MCF 10A (cell line): ENCODE measurements at regions of chr6 and their contacts with region 1.

Region 1: GRCh38 chr6:73675466-73676098 is 20.4 kb upstream of the CD109 start:
- DNase-seq: peak; percentile 90
- H3K4me3 Mint-ChIP-seq: no peak overlapping the region
- H3K27ac Mint-ChIP-seq: no peak overlapping the region
- H3K4me1 Mint-ChIP-seq: peaks cover 18% of the 10 kb centered on the region
- H3K27me3 Mint-ChIP-seq: no peaks in the 10 kb centered on the region
- CTCF ChIP-seq: peak; percentile 85

Region 2: DNA sequence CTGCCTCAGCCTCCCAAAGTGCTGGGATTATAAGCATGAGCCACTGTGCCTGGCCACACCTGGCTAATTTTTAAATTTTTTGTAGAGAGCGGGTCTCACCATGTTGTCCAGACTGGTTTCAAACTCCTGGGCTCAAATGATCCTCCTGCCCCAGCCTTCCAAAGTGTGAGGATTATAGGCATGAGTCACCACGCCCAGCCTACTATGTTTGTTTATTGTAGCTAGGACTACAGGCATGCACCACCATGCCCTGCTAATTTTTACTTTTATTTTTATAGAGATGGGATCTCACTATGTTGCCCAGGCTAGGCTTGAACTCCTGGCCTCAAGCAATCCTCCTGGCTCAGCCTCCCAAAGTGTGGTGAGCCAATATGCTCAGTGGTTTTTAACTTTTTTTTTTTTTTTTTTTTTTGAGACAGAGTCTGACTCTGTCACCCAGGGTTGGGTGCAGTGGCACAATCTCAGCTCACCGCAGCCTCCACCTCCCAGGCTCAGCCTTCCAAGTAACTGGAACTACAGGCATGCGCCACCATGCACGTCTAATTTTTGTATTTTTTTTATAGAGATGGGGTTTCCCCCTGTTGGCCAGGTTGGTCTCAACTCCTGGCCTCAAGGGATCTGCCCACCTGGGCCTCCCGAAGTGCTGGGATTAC is 293.0 kb before region 1 on chr6:
- CTCF ChIA-PET with region 1: no interaction called
- POLR2A ChIA-PET with region 1: no interaction called
- intact Hi-C with region 1: no loop called
- DNase-seq: peak; percentile 54
- H3K4me3 Mint-ChIP-seq: no peak overlapping the region
- H3K27ac Mint-ChIP-seq: no peak overlapping the region
- H3K4me1 Mint-ChIP-seq: no peaks in the 10 kb centered on the region
- H3K27me3 Mint-ChIP-seq: no peaks in the 10 kb centered on the region
- CTCF ChIP-seq: no peak

Region 3: GRCh38 chr6:73688351-73688750 is 12.8 kb after region 1 on chr6:
- CTCF ChIA-PET with region 1: interaction called, 13 read pairs
- POLR2A ChIA-PET with region 1: interaction called, 15 read pairs
- intact Hi-C with region 1: no loop called
- DNase-seq: no peak
- H3K4me3 Mint-ChIP-seq: no peak overlapping the region
- H3K27ac Mint-ChIP-seq: no peak overlapping the region
- H3K4me1 Mint-ChIP-seq: peaks cover 12% of the 10 kb centered on the region
- H3K27me3 Mint-ChIP-seq: no peaks in the 10 kb centered on the region
- CTCF ChIP-seq: no peak

Region 4: GRCh38 chr6:73695619-73696421 is 20.2 kb after region 1 on chr6 and contains the start of gene CD109:
- CTCF ChIA-PET with region 1: interaction called, 9 read pairs
- POLR2A ChIA-PET with region 1: interaction called, 15 read pairs
- intact Hi-C with region 1: loop called (anchors 1 kb)
- DNase-seq: peak; percentile 85
- H3K4me3 Mint-ChIP-seq: peak within 1 kb of the TSS; percentile 93
- H3K27ac Mint-ChIP-seq: peak within 1 kb of the TSS; percentile 93
- H3K4me1 Mint-ChIP-seq: peaks cover 55% of the 10 kb centered on the region
- H3K27me3 Mint-ChIP-seq: no peaks in the 10 kb centered on the region
- CTCF ChIP-seq: no peak
- total RNA-seq, gene CD109: 91.0 and 94.5 TPM in 2 replicates

Region 5: DNA sequence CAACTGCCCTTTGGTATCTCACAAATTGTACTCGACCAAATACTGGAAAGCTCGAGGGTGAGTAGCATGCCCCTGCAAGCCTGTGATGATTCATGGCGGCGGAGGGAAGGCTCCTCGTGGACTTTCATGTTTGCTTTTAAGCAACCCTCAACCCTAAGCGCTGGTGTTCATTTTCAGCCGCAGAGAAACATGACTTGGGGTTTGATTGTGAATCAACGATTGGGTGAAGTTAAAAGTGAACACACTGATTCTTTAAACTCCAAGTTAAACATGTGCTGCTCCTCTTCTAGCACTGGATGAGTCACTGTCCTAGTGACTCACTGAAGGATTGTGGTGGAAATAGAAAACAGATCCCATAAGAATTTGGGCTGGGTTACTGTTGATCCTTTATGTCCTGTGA is 28.7 kb after region 1 on chr6:
- CTCF ChIA-PET with region 1: interaction called, 10 read pairs
- POLR2A ChIA-PET with region 1: interaction called, 8 read pairs
- intact Hi-C with region 1: no loop called
- DNase-seq: peak; percentile 99
- H3K4me3 Mint-ChIP-seq: no peak overlapping the region
- H3K27ac Mint-ChIP-seq: no peak overlapping the region
- H3K4me1 Mint-ChIP-seq: peaks cover 30% of the 10 kb centered on the region
- H3K27me3 Mint-ChIP-seq: no peaks in the 10 kb centered on the region
- CTCF ChIP-seq: no peak

Region 6: DNA sequence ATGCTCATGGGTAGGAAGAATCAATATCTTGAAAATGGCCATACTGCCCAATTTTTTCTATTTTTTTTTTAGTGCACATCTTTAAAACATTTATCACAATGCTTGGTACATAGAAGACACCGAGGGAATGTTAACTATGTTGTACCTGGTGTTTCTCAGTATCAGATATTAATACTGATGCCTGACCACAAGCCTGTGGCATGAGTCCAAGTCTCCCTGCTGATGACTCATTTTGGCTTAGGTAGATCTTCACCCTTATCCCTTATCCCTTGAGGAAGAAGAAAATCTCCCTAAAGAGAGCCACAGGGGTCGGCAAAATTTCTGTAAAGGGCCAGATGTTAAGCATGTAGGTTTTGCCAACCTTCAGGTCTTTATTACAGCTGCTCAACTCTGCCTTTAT is 34.9 kb after region 1 on chr6:
- CTCF ChIA-PET with region 1: interaction called, 16 read pairs
- POLR2A ChIA-PET with region 1: interaction called, 8 read pairs
- intact Hi-C with region 1: no loop called
- DNase-seq: peak; percentile 94
- H3K4me3 Mint-ChIP-seq: no peak overlapping the region
- H3K27ac Mint-ChIP-seq: peak overlapping the region; percentile 1
- H3K4me1 Mint-ChIP-seq: peaks cover 13% of the 10 kb centered on the region
- H3K27me3 Mint-ChIP-seq: no peaks in the 10 kb centered on the region
- CTCF ChIP-seq: no peak

Region 7: DNA sequence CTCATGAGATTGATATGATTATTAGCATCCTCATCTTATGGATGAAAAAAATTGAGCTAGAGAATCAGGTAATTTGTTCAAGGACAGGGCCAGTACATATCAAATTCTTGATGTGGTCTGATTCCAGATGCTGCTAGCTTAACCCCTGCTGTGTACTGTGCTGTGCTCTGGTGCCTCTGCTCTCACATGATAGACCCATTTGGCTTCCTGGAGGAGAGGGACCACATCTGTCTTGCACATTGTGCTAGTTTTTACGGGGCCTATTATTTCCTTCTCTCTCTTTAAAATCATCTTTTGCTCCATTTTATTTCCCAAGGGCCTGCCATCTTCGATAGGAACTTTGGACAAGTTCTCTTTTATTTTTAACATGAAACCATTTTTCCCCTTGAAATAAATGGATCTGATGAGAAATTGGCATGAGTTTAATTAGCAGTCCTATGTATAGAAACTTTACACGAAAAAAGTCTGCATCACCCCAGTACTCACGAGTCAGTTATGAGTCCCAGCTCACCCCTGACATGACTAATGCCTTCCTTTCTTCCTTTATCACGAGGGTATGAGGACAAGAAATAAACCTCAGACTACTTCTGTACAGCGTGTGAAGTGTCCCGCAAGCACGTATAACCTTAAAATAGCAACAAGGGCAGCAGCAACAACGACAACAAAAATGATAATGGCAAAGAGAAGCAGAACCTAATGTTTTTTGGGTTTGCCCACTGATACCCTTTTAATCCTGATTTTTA is 46.9 kb after region 1 on chr6:
- CTCF ChIA-PET with region 1: interaction called, 11 read pairs
- POLR2A ChIA-PET with region 1: interaction called, 3 read pairs
- intact Hi-C with region 1: no loop called
- DNase-seq: peak; percentile 58
- H3K4me3 Mint-ChIP-seq: no peak overlapping the region
- H3K27ac Mint-ChIP-seq: peak overlapping the region; percentile 37
- H3K4me1 Mint-ChIP-seq: peaks cover 24% of the 10 kb centered on the region
- H3K27me3 Mint-ChIP-seq: no peaks in the 10 kb centered on the region
- CTCF ChIP-seq: no peak

Region 8: DNA sequence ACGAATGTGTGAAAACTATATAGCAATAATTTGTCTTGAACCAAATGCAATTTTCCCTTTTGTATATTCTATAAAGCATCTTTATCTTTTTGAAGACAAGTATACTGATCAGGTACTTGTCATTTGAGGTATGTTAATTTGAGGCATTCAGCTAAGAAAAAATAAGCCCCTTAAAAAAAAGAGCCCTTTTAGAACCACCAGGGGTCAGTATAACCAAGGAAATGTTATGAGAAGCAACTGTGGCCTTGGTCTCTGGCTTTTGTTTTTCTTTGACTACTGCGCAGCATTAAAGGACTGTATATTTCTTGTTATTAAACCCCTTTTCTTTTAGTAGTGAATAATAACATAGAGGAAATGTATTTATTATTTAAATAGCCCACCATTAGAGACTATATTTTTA is 63.5 kb after region 1 on chr6:
- CTCF ChIA-PET with region 1: interaction called, 203 read pairs
- POLR2A ChIA-PET with region 1: interaction called, 17 read pairs
- intact Hi-C with region 1: no loop called
- DNase-seq: peak; percentile 68
- H3K4me3 Mint-ChIP-seq: no peak overlapping the region
- H3K27ac Mint-ChIP-seq: no peak overlapping the region
- H3K4me1 Mint-ChIP-seq: peaks cover 28% of the 10 kb centered on the region
- H3K27me3 Mint-ChIP-seq: no peaks in the 10 kb centered on the region
- CTCF ChIP-seq: peak; percentile 75

Region 9: GRCh38 chr6:73879501-73880293 is 204.1 kb after region 1 on chr6:
- CTCF ChIA-PET with region 1: no interaction called
- POLR2A ChIA-PET with region 1: no interaction called
- intact Hi-C with region 1: no loop called
- DNase-seq: no peak
- H3K4me3 Mint-ChIP-seq: no peak overlapping the region
- H3K27ac Mint-ChIP-seq: no peak overlapping the region
- H3K4me1 Mint-ChIP-seq: no peaks in the 10 kb centered on the region
- H3K27me3 Mint-ChIP-seq: no peaks in the 10 kb centered on the region
- CTCF ChIP-seq: no peak